Transverse colon (tissue), 4 donors: ENCODE measurements at regions of chr6 and their contacts with region 1.

Region 1: DNA sequence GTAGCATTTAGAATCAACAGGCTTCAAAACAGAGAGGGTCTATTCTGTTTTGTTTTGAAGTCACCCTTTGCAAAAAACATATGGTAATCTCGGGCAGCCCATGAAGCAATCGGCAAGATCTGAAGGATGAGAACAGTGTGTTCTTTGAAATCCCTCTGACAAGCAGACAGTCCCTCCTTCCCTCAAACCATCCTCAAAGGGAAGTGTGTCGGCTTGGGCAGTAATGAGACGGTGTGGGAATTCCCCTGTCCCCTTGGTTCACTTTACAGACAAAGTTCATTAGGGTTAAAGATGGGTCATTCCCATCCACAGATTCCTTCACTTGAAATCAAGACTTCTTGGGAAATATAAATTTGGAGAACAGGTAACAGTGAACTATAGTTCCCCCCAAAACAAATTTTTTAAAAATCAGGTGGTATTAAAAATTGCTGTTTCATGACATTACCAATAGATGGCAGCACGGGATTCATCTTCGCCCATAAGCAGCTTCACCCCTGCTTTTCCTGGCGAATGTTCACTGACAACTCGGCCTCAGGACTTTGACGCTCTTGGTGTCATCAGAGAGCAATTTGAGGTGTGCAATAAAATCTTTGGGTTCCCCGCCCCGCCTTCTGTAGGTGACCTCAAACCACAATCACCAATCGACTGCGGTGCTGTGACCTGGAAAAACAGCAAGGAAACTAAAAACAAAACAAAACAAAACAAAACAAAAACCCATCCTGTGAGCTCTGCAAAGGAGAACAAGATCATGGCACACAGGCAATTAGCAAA is 159.3 kb upstream of the TNFAIP3 start:
- DNase-seq: peak; percentile 81
- H3K4me3 ChIP-seq: no peak overlapping the region
- H3K27ac ChIP-seq: peak overlapping the region; percentile 13 to 53 (median 30)
- H3K4me1 ChIP-seq: peaks cover 0 to 41% (median 7%) of the 10 kb centered on the region in 4 donors
- H3K27me3 ChIP-seq: no peaks in the 10 kb centered on the region
- CTCF ChIP-seq: peak; percentile 76 to 88 (median 80)
- EP300 ChIP-seq: no peak
- POLR2A ChIP-seq: no peak

Region 2: GRCh38 chr6:137432054-137432611 is 275.6 kb before region 1 on chr6:
- in situ Hi-C with region 1: no loop called
- intact Hi-C with region 1: no loop called
- DNase-seq: no peak
- H3K4me3 ChIP-seq: no peak overlapping the region
- H3K27ac ChIP-seq: no peak overlapping the region
- H3K4me1 ChIP-seq: no peaks in the 10 kb centered on the region
- H3K27me3 ChIP-seq: no peaks in the 10 kb centered on the region
- CTCF ChIP-seq: no peak
- EP300 ChIP-seq: no peak
- POLR2A ChIP-seq: no peak

Region 3: GRCh38 chr6:137799950-137800568 is 92.3 kb after region 1 on chr6:
- in situ Hi-C with region 1: loop called in 1 of 4 experiments (anchors 5 kb)
- intact Hi-C with region 1: no loop called
- DNase-seq: peak; percentile 44
- H3K4me3 ChIP-seq: no peak overlapping the region
- H3K27ac ChIP-seq: peak overlapping the region in 2 of 4 donors; percentile 14 to 49
- H3K4me1 ChIP-seq: peaks cover 0 to 41% (median 7%) of the 10 kb centered on the region in 4 donors
- H3K27me3 ChIP-seq: no peaks in the 10 kb centered on the region
- CTCF ChIP-seq: peak; percentile 39 to 55 (median 49)
- EP300 ChIP-seq: no peak
- POLR2A ChIP-seq: no peak

Region 4: GRCh38 chr6:137866914-137867684 is 159.3 kb after region 1 on chr6 and contains the start of gene TNFAIP3:
- in situ Hi-C with region 1: loop called (anchors 5 to 10 kb)
- intact Hi-C with region 1: loop called (anchors 2 kb)
- DNase-seq: peak; percentile 96
- H3K4me3 ChIP-seq: peak within 1 kb of the TSS; percentile 66 to 84 (median 72)
- H3K27ac ChIP-seq: peak within 1 kb of the TSS; percentile 91 to 98 (median 97)
- H3K4me1 ChIP-seq: peaks cover 5 to 59% (median 21%) of the 10 kb centered on the region in 4 donors
- H3K27me3 ChIP-seq: no peaks in the 10 kb centered on the region
- CTCF ChIP-seq: peak; percentile 63 to 81 (median 71)
- EP300 ChIP-seq: peak; percentile 12
- POLR2A ChIP-seq: peak; percentile 96
- total RNA-seq, gene TNFAIP3: 21.4 to 46.8 (median 36.3) TPM

Region 5: GRCh38 chr6:137944793-137945498 is 237.2 kb after region 1 on chr6:
- in situ Hi-C with region 1: loop called (anchors 5 to 10 kb)
- intact Hi-C with region 1: loop called (anchors 2 kb)
- DNase-seq: no peak
- H3K4me3 ChIP-seq: no peak overlapping the region
- H3K27ac ChIP-seq: no peak overlapping the region
- H3K4me1 ChIP-seq: no peaks in the 10 kb centered on the region
- H3K27me3 ChIP-seq: no peaks in the 10 kb centered on the region
- CTCF ChIP-seq: peak; percentile 64 to 77 (median 73)
- EP300 ChIP-seq: no peak
- POLR2A ChIP-seq: no peak

Region 6: DNA sequence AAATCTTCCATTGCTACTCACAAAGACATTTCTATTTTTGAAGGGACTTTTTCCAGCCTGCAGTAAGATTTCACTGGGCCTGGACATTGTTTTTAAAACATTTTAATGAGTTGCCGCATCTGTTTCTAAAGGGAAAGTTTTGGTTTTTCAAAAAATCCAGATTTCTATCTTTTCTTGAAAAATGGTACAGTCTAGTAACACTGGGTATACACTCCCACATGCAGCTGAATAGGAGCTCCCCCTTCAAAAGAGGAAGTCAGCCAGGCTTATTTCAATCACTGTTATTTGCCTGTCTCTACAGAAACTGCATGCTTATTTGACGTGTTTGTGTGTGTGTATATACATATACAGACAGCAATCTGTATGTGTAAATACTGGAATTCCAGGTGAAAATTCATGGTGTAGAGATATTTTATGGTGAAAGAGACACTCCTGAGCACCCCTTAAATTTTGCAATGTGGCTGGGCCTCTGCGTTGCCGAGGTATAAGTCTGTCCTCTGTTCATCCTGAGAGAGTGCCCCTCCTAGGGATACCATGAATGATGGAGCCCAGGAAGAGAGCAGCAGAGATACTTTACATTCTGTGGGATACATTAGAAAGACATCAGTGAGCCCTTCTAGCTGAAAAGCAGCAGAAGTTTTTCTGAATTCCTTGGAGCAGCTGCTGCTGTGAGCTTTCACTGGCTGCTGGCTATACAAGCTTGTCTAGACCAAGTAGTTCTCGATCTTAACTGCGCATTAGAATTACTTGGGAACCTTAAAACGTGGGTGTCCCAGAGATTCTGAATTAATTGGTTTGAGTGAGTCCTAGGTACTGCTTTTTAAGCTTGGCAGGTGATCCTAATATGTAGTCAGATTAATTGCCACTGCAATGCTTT is 1308.8 kb after region 1 on chr6:
- in situ Hi-C with region 1: no loop called
- intact Hi-C with region 1: no loop called
- DNase-seq: no peak
- H3K4me3 ChIP-seq: no peak overlapping the region
- H3K27ac ChIP-seq: no peak overlapping the region
- H3K4me1 ChIP-seq: peaks cover 0 to 39% (median 9%) of the 10 kb centered on the region in 4 donors
- H3K27me3 ChIP-seq: no peaks in the 10 kb centered on the region
- CTCF ChIP-seq: no peak
- EP300 ChIP-seq: no peak
- POLR2A ChIP-seq: no peak